ENCODE measurements at regions of chr11 and their contacts with region 1.

Region 1: DNA sequence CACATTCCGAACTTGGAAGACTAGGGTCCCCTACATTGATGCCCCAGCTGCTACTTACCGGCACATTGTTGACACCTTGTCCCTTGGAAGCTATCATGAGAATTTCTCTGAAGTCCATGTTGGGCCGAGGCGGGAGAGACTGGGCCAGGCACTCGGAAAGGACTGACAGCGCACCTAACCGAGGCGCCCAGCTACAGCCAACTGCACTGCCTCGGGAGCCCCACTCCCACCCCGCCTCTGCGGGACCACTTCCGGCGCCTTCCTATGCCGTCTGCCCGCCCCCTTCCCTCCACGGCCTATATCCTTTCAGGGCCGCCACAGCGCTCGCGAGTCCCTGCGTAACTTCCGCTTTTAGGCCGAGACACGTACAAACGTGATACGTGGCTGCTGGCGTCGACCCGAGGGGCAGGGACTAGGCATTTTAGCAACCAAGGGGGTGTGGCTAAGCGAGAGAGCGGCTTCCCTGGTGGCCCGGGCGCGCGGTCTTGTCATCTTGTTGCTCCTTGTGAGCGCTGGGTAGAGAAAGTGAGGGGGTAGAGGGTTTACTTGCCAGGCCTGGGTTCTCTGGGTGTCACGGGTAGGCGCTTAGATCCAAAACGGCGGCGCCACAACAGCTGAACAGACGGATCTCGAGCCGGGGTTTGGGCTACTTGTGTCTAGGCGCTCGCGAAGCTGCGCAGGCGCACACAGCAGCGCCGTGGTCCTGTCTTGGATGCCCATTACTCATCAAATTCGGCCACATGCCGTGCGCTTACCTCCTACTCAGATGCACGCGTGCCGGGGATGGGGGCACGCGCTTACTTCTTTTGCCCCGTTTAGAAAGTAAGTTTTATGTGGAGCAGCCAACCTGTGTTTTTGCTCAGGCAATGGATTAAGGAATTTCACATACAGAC is at the start of gene SPTY2D1:
- DNase-seq: peak; percentile 99 to 100 (median 99)
- ATAC-seq: peak; percentile 99 to 100 (median 99)
- H3K4me3 ChIP-seq: peak within 1 kb of the TSS; percentile 72 to 99 (median 93)
- H3K27ac ChIP-seq: peak within 1 kb of the TSS; percentile 89 to 97 (median 94)
- H3K4me1 ChIP-seq: peaks cover 0 to 23% (median 15%) of the 10 kb centered on the region in 12 donors
- H3K27me3 ChIP-seq: no peaks in the 10 kb centered on the region
- CTCF ChIP-seq: peak in 1 of 12 donors; percentile 24
- POLR2A ChIP-seq: peak; percentile 4 to 89
- total RNA-seq, gene SPTY2D1: 8.2 to 13.3 (median 11.4) TPM

Region 2: GRCh38 chr11:17991783-17992433 is 642.5 kb before region 1 on chr11:
- intact Hi-C with region 1: no loop called
- DNase-seq: no peak
- ATAC-seq: peak in 2 of 4 donors; percentile 47 to 68
- H3K4me3 ChIP-seq: no peak overlapping the region
- H3K27ac ChIP-seq: no peak overlapping the region
- H3K4me1 ChIP-seq: no peaks in the 10 kb centered on the region
- H3K27me3 ChIP-seq: no peaks in the 10 kb centered on the region
- CTCF ChIP-seq: peak; percentile 57 to 86 (median 74)
- POLR2A ChIP-seq: no peak

Region 3: DNA sequence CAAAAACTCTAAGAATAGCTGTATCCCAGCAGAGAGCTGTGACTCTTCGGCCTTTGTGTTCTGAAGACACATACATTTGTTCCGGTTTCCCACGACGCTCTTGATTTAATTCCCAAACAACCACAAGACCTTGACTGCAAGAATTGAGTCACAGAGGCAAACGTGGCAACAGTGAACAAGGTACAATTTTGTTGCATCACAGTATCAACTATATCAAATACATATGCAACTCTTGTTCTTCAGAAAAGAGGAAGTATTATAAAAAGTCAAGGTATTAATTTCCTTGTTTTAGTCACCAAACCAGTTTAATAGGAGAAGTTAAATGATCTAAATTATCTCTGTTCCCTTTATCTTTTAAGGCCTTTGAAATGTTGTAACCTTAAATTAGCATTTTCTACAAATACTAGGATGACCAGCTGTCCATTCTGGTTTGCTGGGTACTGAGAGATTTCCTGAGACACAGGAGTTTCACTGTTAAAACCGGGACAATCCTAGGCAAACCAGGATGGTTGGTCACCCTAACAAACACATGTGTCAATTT is 323.5 kb before region 1 on chr11:
- intact Hi-C with region 1: loop called in 1 of 10 experiments (anchors 10 kb)
- DNase-seq: no peak
- ATAC-seq: no peak
- H3K4me3 ChIP-seq: no peak overlapping the region
- H3K27ac ChIP-seq: no peak overlapping the region
- H3K4me1 ChIP-seq: peaks cover 0 to 28% (median 0%) of the 10 kb centered on the region in 12 donors
- H3K27me3 ChIP-seq: no peaks in the 10 kb centered on the region
- CTCF ChIP-seq: no peak
- POLR2A ChIP-seq: no peak

Region 4: DNA sequence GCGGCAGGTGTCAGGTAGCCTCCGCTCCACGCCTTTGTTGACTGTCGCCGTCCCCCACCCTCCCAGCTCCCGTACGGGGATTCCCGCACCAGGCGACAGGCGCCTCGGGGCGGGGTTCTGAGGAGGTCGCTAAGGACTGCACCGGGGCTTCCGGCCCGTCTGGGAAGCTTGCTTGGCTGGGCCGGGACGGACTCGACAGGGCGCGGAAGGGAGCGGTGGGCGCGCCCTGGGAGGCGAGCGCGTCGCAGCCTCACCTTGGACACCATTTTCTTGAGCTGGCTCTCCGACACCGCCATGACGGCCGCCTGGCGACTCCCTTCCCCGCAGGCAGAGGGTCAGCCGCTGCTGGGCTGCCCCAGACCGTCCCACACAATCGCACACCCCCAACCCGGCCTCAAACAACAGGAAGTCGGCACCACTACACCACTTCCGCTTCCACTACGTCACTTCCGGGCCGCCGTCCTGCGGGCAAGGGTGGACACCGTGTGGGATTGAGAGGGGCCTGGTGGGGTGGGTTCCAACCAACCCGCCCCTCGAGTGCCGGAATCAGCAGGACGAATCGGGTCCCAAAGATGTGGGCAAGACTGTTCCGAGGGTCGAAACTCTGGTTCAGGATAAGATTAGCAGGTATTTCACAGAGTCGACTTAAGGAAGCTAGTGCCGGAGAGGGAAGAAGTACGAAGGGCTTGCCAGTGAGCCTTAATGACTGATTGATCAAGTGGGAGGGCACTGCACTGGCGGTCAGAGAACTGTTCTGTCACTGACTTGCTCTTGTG is 107.7 kb before region 1 on chr11 and contains the start of gene TSG101:
- intact Hi-C with region 1: loop called in 1 of 10 experiments (anchors 1 kb)
- DNase-seq: peak; percentile 94 to 97 (median 97)
- ATAC-seq: peak; percentile 99
- H3K4me3 ChIP-seq: peak within 1 kb of the TSS; percentile 48 to 96 (median 90)
- H3K27ac ChIP-seq: peak within 1 kb of the TSS; percentile 83 to 98 (median 94)
- H3K4me1 ChIP-seq: peaks cover 0 to 39% (median 16%) of the 10 kb centered on the region in 12 donors
- H3K27me3 ChIP-seq: no peaks in the 10 kb centered on the region
- CTCF ChIP-seq: no peak
- POLR2A ChIP-seq: peak; percentile 7 to 87
- total RNA-seq, gene TSG101: 58.6 to 156 (median 69.1) TPM

Region 5: DNA sequence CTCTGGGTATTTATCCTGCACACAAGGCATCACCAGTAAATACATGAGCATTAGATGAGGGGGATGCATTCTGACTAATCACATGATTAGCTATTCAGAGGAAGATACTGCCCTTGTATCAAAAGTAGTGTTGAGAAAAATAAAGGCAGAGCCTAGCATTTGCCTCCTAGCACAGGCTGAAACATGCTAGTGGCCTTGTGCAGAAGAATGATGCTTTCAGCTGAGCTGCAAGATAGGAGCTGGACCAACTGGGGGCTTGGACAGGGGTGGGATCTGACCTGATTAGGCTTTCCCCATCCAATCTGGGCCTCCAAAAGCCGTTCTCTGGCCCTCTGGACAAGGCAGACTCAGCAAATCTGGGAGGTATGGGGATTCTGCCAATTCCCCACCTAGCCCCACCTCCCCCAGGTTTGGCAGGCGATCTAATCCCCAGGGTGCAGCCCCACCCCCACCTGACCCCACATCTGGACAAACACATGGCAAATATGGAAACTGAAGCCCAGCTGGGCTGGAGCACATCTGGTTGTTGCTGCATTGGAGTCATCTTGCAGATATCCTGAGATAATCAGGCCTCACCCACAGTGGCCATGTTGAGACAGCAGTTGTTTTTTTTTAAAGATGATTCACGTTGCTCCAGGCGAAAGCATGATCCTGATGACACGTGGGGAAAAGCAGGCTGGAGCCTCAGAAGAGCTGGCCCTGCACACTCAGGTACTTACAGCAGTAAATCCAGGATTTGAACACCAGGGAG is 39.2 kb before region 1 on chr11:
- intact Hi-C with region 1: loop called in 1 of 10 experiments (anchors 5 kb)
- DNase-seq: no peak
- ATAC-seq: no peak
- H3K4me3 ChIP-seq: no peak overlapping the region
- H3K27ac ChIP-seq: no peak overlapping the region
- H3K4me1 ChIP-seq: peaks cover 0 to 18% (median 9%) of the 10 kb centered on the region in 12 donors
- H3K27me3 ChIP-seq: no peaks in the 10 kb centered on the region
- CTCF ChIP-seq: no peak
- POLR2A ChIP-seq: no peak

Region 6: GRCh38 chr11:18650859-18651557 is 16.6 kb after region 1 on chr11:
- intact Hi-C with region 1: no loop called
- DNase-seq: peak in 4 of 5 donors; percentile 18 to 37 (median 24)
- ATAC-seq: peak in 3 of 4 donors; percentile 13 to 50 (median 22)
- H3K4me3 ChIP-seq: no peak overlapping the region
- H3K27ac ChIP-seq: no peak overlapping the region
- H3K4me1 ChIP-seq: no peaks in the 10 kb centered on the region
- H3K27me3 ChIP-seq: no peaks in the 10 kb centered on the region
- CTCF ChIP-seq: peak in 11 of 12 donors; percentile 20 to 50 (median 44)
- POLR2A ChIP-seq: no peak

Region 7: DNA sequence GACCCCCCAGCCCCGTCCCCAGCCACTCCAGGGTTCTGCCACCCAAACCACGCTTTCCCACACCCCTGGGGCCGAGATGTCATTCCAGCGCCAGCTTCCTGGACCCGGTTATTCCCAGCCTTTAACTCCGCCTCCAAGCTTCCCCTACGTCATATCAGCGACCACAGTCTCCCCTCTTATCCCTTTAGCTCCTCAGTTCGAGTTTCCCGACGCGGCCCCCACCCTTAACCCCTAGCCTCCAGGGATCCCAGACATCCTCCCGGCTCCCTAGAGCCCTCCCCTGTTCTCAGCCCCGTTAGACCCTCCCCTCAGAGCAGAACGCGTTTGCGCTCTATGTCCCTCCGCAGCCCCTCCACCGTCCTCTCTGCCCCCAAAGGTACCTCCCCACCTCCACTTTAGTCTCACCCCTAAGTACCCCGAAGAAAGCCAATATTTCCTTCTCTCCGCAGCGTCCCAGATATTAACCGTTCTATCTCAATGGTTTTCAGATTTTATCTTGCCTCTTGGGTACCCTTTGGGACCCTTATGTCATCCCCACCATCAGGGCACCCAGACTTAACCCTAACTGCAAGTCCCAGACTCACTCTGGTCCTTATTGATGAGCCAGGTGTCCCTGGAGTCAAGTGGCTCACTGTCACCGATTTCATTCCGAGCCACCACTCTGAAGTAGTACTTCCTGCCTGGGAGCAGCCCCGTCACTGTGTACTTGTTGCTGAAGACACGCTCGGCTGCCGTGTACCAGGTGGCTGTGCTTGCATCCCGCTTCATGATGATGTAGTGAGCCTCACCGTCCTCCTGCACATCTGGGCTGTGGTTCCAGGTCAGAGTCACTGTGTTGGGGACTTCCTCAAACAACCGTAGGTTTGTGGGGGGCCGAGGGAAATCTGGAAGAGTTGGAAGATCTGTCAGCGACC is 72.2 kb after region 1 on chr11:
- intact Hi-C with region 1: loop called in 5 of 10 experiments (anchors 5 kb)
- DNase-seq: peak in 4 of 5 donors; percentile 72 to 79 (median 76)
- ATAC-seq: peak in 3 of 4 donors; percentile 49 to 82 (median 74)
- H3K4me3 ChIP-seq: peak overlapping the region; percentile 12 to 70 (median 59)
- H3K27ac ChIP-seq: peak overlapping the region in 10 of 12 donors; percentile 49 to 81 (median 64)
- H3K4me1 ChIP-seq: peaks cover 7 to 49% (median 21%) of the 10 kb centered on the region in 12 donors
- H3K27me3 ChIP-seq: no peaks in the 10 kb centered on the region
- CTCF ChIP-seq: no peak
- POLR2A ChIP-seq: no peak